Activated CD4-positive, alpha-beta T cell treated with anti-CD3 and anti-CD28 coated beads for 36 hours (primary cell): ENCODE measurements at regions of chr1 and their contacts with region 1.

Region 1: DNA sequence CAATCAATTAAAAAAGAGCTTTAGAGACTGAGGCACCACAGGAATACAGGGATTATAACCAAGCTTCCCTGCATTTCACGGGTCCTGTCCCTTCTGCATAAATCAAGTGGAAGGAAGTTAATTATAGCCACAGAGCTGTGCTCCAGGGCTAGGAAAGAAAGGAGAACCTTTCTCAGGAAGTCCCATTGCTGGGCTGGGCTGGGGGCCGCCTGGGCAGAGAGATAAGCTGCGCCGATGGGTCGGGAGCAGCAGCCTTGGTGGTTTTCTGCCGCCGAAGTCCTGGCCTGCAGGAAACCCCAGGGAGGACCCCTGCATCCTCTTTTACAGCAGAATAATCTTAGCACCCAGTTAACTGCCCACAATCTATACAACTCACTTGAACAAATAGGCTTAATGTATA is 12.6 kb upstream of the CD34 start:
- DNase-seq: no peak
- ATAC-seq: no peak
- H3K4me3 Mint-ChIP-seq: no peak overlapping the region
- H3K27ac Mint-ChIP-seq: no peak overlapping the region
- H3K4me1 Mint-ChIP-seq: no peaks in the 10 kb centered on the region
- H3K27me3 Mint-ChIP-seq: peaks cover 18% of the 10 kb centered on the region

Region 2: DNA sequence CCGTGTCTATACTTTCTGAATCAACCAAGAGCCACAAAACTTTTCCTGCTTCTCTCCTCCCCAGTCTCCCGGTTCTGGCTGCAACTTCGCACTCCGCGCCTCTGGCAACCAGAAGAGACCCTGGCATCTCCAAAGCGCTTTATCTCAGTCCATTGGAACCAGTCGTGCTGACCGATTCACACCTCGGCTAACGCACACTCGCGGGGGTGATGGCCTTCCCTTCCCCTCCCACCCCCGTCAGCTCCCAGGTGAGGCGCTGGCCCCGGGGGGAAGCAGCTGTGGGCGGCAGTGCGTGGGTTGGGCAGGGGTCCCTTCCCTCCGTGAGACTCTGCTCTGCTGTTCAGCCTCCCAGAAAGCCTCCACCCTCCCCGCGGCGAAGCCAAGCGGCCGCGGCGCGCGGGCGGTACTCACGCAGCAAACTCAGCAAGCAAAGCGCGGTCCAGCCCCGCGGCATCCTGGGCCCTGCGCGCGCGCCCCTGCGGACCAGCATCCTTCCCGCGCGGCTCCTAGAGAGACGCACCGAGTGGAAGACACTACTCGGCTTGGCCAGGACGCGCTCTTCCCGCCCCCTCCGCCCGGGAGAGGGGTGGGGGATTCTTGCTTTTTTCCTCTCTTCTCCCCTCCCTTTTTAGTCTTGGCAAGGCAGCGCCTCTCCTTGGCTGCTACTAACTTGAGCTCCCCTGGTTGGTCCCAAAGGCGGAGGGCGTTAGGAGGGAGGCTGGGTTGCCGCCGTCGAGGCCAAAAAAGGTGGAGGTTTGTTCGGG is 12.8 kb before region 1 on chr1 and contains the start of gene CD34:
- CTCF ChIA-PET with region 1: interaction called, 3 read pairs
- POLR2A ChIA-PET with region 1: no interaction called
- intact Hi-C with region 1: loop called in 1 of 2 experiments (anchors 1 kb)
- DNase-seq: peak; percentile 60
- ATAC-seq: peak; percentile 72
- H3K4me3 Mint-ChIP-seq: peak within 1 kb of the TSS; percentile 31
- H3K27ac Mint-ChIP-seq: no peak within 1 kb of the TSS
- H3K4me1 Mint-ChIP-seq: peaks cover 11% of the 10 kb centered on the region
- H3K27me3 Mint-ChIP-seq: peaks cover 56% of the 10 kb centered on the region
- total RNA-seq, gene CD34: 0.02 to 0.04 TPM

Region 3: DNA sequence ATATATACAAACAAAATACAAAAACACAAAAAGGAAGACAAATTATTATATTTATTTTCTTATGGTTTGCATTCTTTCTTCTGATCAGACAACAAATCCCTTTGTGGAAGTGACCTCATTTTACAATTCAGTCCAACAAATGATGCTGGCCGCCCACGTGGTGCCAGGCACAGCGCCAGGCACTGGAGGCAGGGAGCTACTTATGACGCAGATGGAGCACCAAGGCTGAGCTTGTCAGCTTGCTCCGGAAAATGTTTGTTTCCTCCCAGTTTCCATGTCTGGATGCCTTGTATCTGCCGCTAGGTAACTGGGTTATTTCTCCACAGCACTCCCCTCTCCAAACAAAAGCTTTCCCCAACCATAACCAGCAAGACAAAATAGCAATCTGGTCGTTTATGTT is 18.1 kb after region 1 on chr1:
- CTCF ChIA-PET with region 1: interaction called, 3 read pairs
- POLR2A ChIA-PET with region 1: no interaction called
- intact Hi-C with region 1: loop called in 1 of 2 experiments (anchors 2 kb)
- DNase-seq: no peak
- ATAC-seq: no peak
- H3K4me3 Mint-ChIP-seq: no peak overlapping the region
- H3K27ac Mint-ChIP-seq: no peak overlapping the region
- H3K4me1 Mint-ChIP-seq: no peaks in the 10 kb centered on the region
- H3K27me3 Mint-ChIP-seq: peaks cover 14% of the 10 kb centered on the region

Region 4: DNA sequence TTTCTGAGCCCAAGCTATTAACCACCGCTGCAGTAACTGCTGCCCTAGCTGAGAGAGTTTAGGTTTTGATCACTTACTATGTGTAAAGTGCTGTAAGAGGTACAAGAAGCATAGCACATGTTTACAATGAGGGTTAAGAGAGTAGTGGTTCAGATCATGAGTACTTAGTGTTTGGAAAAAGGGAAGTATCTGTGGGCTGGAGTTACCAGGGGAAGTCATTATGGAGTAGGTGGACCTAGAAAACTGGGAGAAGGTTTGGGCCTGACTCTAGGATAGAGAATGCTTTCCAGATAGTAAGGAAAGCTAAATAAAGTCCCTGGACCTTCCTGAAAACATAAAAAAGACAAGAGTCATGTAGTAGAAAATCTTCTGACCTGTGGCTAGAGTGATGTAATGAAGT is 470.3 kb after region 1 on chr1:
- CTCF ChIA-PET with region 1: no interaction called
- POLR2A ChIA-PET with region 1: no interaction called
- intact Hi-C with region 1: no loop called
- DNase-seq: no peak
- ATAC-seq: no peak
- H3K4me3 Mint-ChIP-seq: no peak overlapping the region
- H3K27ac Mint-ChIP-seq: no peak overlapping the region
- H3K4me1 Mint-ChIP-seq: no peaks in the 10 kb centered on the region
- H3K27me3 Mint-ChIP-seq: peaks cover 9% of the 10 kb centered on the region